A673 (cell line): ENCODE measurements at regions of chr5 and their contacts with region 1.

Region 1: DNA sequence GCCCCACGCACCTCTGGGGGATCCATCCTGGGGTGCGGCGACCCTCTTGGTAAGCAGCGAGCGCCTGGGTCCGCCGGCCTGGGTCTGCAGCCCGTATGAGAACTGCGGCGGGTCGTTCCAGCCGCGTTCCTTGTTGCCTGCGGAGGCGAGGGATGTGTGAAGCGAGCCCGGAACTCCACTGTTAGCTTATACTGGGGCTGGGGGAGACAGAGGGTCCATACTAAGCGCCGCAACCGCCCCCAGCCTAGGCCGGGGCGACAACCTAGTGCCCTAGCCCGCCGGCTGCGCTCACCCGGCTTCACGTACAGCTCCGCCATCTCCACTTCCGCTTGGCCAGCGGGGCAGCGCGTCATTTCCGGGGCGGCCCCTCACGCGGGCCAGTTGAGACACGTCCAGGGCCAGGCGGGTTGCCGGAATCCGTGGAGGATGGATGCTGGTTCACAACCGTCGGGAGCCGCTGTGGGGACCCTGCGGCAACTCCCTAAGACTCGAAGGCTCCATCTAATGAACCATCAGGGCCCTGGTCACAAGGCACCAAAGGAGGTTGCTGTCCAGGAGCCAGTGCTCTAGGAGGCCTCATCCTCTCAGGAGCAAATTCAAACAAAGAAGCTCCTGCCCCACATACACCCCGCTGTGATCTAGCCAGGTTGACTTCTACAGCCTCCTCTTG is at the start of gene SRA1:
- DNase-seq: peak; percentile 94
- H3K4me3 ChIP-seq: peak within 1 kb of the TSS; percentile 82
- H3K27ac ChIP-seq: peak within 1 kb of the TSS; percentile 95
- H3K4me1 ChIP-seq: peaks cover 14% of the 10 kb centered on the region
- H3K27me3 ChIP-seq: no peaks in the 10 kb centered on the region
- CTCF ChIP-seq: 0 out of 2 replicates have a peak, but pooled peaks have one; percentile 10
- total RNA-seq, gene SRA1: 55.1 and 62.3 TPM in 2 replicates

Region 2: GRCh38 chr5:140346348-140347101 is 210.7 kb before region 1 on chr5 and contains the start of gene HBEGF:
- CTCF ChIA-PET with region 1: no interaction called
- POLR2A ChIA-PET with region 1: no interaction called
- intact Hi-C with region 1: no loop called
- DNase-seq: peak; percentile 70
- H3K4me3 ChIP-seq: peak within 1 kb of the TSS; percentile 76
- H3K27ac ChIP-seq: peak within 1 kb of the TSS; percentile 57
- H3K4me1 ChIP-seq: peaks cover 34% of the 10 kb centered on the region
- H3K27me3 ChIP-seq: no peaks in the 10 kb centered on the region
- CTCF ChIP-seq: peak; percentile 37; the same call in 1 of the 2 replicates
- total RNA-seq, gene HBEGF: 12.0 and 14.7 TPM in 2 replicates

Region 3: GRCh38 chr5:140432916-140433315 is 124.4 kb before region 1 on chr5:
- CTCF ChIA-PET with region 1: no interaction called
- POLR2A ChIA-PET with region 1: no interaction called
- intact Hi-C with region 1: no loop called
- DNase-seq: no peak
- H3K4me3 ChIP-seq: no peak overlapping the region
- H3K27ac ChIP-seq: no peak overlapping the region
- H3K4me1 ChIP-seq: no peaks in the 10 kb centered on the region
- H3K27me3 ChIP-seq: no peaks in the 10 kb centered on the region
- CTCF ChIP-seq: no peak

Region 4: GRCh38 chr5:140710899-140711552 is 153.8 kb after region 1 on chr5:
- CTCF ChIA-PET with region 1: no interaction called
- POLR2A ChIA-PET with region 1: no interaction called
- intact Hi-C with region 1: loop called (anchors 10 kb)
- DNase-seq: peak; percentile 98
- H3K4me3 ChIP-seq: peak overlapping the region; percentile 66
- H3K27ac ChIP-seq: peak overlapping the region; percentile 91
- H3K4me1 ChIP-seq: no peaks in the 10 kb centered on the region
- H3K27me3 ChIP-seq: no peaks in the 10 kb centered on the region
- CTCF ChIP-seq: no peak